Activated CD8-positive, alpha-beta T cell treated with anti-CD3 and anti-CD28 coated beads, Interleukin-2, amount 10 ng/mL, durations not matched to agents 7 days and 5 days (primary cell): ENCODE measurements at regions of chr20 and their contacts with region 1.

Region 1: DNA sequence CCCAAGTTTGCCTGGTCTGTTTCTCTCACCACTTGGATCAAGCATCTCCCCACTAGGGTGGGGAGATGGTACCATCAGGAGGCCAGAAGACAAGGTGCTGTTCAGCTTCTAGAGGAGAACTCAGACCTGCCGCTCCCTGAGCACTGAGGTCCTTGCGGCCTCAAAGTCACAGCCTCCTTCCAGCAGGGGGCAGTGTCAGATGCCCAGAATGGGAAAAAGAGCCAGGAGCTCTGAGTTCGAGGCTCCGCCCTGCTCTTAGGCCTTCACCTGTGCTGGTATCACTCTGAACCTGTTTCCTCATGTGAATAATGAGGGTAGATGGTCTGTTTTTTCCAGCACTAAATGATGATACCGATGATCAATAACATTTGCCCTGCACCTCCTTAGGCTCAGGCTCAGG is 68.7 kb downstream of the TOX2 start:
- DNase-seq: peak; percentile 55
- ATAC-seq: no peak
- H3K4me3 Mint-ChIP-seq: no peak overlapping the region
- H3K27ac Mint-ChIP-seq: no peak overlapping the region
- H3K4me1 Mint-ChIP-seq: peaks cover 12% of the 10 kb centered on the region
- H3K27me3 Mint-ChIP-seq: peaks cover 36% of the 10 kb centered on the region

Region 2: GRCh38 chr20:43942661-43943290 is 40.6 kb before region 1 on chr20:
- CTCF ChIA-PET with region 1: interaction called, 10 read pairs
- POLR2A ChIA-PET with region 1: no interaction called
- DNase-seq: peak; percentile 53
- ATAC-seq: peak; percentile 79
- H3K4me3 Mint-ChIP-seq: peak overlapping the region; percentile 17
- H3K27ac Mint-ChIP-seq: peak overlapping the region; percentile 74
- H3K4me1 Mint-ChIP-seq: peaks cover 60% of the 10 kb centered on the region
- H3K27me3 Mint-ChIP-seq: peaks cover 45% of the 10 kb centered on the region

Region 3: GRCh38 chr20:43955062-43955749 is 28.2 kb before region 1 on chr20:
- CTCF ChIA-PET with region 1: no interaction called
- POLR2A ChIA-PET with region 1: no interaction called
- DNase-seq: peak; percentile 61
- ATAC-seq: peak; percentile 82
- H3K4me3 Mint-ChIP-seq: peak overlapping the region; percentile 9
- H3K27ac Mint-ChIP-seq: peak overlapping the region; percentile 0
- H3K4me1 Mint-ChIP-seq: peaks cover 72% of the 10 kb centered on the region
- H3K27me3 Mint-ChIP-seq: peaks cover 45% of the 10 kb centered on the region

Region 4: GRCh38 chr20:43972692-43973091 is 10.7 kb before region 1 on chr20:
- CTCF ChIA-PET with region 1: interaction called, 11 read pairs
- POLR2A ChIA-PET with region 1: interaction called, 3 read pairs
- DNase-seq: no peak
- ATAC-seq: no peak
- H3K4me3 Mint-ChIP-seq: no peak overlapping the region
- H3K27ac Mint-ChIP-seq: no peak overlapping the region
- H3K4me1 Mint-ChIP-seq: peaks cover 2% of the 10 kb centered on the region
- H3K27me3 Mint-ChIP-seq: peaks cover 27% of the 10 kb centered on the region